ENCODE measurements at regions of chrX and their contacts with region 1.

Region 1: DNA sequence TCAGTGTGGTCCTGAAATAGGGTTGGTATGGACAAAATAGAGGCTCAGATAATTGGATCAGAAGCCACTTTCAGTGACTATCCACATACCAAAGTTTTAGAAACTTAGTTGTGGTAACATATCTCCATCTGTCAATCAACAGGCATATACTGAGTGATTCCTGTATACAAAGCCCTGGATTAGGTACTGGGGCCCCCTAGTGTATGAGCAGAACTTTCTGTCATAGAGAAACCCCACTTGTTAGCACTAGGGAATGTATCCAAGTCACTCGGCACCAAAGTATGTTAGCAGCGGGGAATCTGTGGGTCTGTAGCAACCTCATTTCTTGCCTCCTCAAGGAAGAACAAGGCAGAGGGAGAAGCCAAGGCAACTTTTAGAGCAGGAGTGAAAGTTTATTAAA is 50.7 kb downstream of the MAP7D3 start:
- DNase-seq: peak in 1 of 5 donors; percentile 35
- H3K4me3 ChIP-seq: no peak overlapping the region
- H3K4me3 Mint-ChIP-seq: no peak overlapping the region
- H3K27ac ChIP-seq: no peak overlapping the region
- H3K27ac Mint-ChIP-seq: peak overlapping the region in 4 of 7 donors; percentile 24 to 85 (median 67)
- H3K4me1 ChIP-seq: peaks cover 37% of the 10 kb centered on the region
- H3K4me1 Mint-ChIP-seq: peaks cover 22 to 50% (median 31%) of the 10 kb centered on the region in 4 donors
- H3K27me3 ChIP-seq: no peaks in the 10 kb centered on the region
- H3K27me3 Mint-ChIP-seq: no peaks in the 10 kb centered on the region

Region 2: DNA sequence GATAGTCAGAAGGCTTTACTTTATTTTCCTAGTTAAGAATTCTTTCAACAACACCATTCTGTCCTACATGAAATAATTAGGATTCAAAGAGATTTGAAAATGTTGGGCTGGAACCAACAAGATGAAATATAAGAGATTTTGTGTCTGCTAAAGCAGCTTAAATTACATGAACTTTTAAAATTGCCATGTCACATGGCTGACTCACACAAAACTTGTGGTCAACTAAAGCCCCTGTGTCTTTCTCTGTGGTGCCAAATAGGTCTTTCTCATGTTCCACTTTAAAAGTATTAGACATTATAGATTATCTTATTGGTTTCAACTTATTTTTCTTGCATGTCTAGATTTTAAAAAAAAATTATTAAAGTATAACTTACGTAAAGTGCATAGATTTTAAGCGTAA is 113.9 kb before region 1 on chrX:
- CTCF ChIA-PET with region 1: no interaction called
- POLR2A ChIA-PET with region 1: no interaction called
- intact Hi-C with region 1: no loop called
- DNase-seq: no peak
- H3K4me3 ChIP-seq: no peak overlapping the region
- H3K4me3 Mint-ChIP-seq: no peak overlapping the region
- H3K27ac ChIP-seq: no peak overlapping the region
- H3K27ac Mint-ChIP-seq: no peak overlapping the region
- H3K4me1 ChIP-seq: no peaks in the 10 kb centered on the region
- H3K4me1 Mint-ChIP-seq: no peaks in the 10 kb centered on the region
- H3K27me3 ChIP-seq: no peaks in the 10 kb centered on the region
- H3K27me3 Mint-ChIP-seq: no peaks in the 10 kb centered on the region

Region 3: DNA sequence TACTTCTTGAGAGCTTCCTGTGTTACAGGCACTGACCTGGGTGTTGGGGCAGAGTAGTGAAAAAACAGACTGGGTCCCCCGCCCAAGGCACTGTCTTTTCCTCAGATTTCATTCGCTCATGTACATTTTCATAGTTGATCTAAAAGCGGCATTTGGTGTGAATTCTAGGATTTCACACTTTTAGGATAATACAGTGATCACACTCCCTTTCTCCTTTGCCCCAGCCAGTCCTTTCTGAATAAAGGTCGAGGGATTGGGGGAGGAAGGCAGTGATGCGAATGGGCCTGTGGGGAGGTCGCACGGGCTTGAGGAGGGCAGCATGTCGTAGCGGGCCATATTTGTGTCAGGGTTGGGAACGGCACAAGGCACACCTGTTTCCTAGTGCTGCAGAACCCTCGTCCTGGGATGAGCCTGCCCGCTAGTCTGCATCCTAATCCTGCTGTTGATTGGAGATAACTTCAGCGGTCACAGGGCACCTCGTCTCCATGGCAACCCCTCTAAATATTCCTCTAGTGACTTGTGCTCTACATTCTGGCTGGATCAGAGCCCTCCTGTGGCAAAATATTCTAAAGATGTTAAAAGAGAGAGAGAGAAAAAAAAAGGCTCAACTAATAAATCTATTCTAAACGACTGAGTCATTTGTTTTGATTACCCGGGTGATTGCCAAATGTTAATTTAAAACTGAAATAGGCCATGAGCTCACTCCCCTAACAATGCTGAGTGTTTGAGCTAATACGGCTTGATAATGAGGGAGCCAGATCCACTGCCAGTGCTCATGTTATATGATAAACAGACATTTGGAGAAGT is 31.3 kb before region 1 on chrX:
- CTCF ChIA-PET with region 1: interaction called, 3 read pairs
- POLR2A ChIA-PET with region 1: no interaction called
- intact Hi-C with region 1: loop called (anchors 5 kb)
- DNase-seq: no peak
- H3K4me3 ChIP-seq: no peak overlapping the region
- H3K4me3 Mint-ChIP-seq: no peak overlapping the region
- H3K27ac ChIP-seq: no peak overlapping the region
- H3K27ac Mint-ChIP-seq: no peak overlapping the region
- H3K4me1 ChIP-seq: no peaks in the 10 kb centered on the region
- H3K4me1 Mint-ChIP-seq: peaks cover 0 to 6% (median 0%) of the 10 kb centered on the region in 4 donors
- H3K27me3 ChIP-seq: no peaks in the 10 kb centered on the region
- H3K27me3 Mint-ChIP-seq: no peaks in the 10 kb centered on the region

Region 4: GRCh38 chrX:136268051-136269048 is 67.9 kb after region 1 on chrX:
- CTCF ChIA-PET with region 1: no interaction called
- POLR2A ChIA-PET with region 1: interaction called, 4 read pairs
- intact Hi-C with region 1: loop called (anchors 2 kb)
- DNase-seq: peak; percentile 34 to 54 (median 44)
- H3K4me3 ChIP-seq: no peak overlapping the region
- H3K4me3 Mint-ChIP-seq: no peak overlapping the region
- H3K27ac ChIP-seq: no peak overlapping the region
- H3K27ac Mint-ChIP-seq: no peak overlapping the region
- H3K4me1 ChIP-seq: no peaks in the 10 kb centered on the region
- H3K4me1 Mint-ChIP-seq: no peaks in the 10 kb centered on the region
- H3K27me3 ChIP-seq: no peaks in the 10 kb centered on the region
- H3K27me3 Mint-ChIP-seq: no peaks in the 10 kb centered on the region

Region 5: DNA sequence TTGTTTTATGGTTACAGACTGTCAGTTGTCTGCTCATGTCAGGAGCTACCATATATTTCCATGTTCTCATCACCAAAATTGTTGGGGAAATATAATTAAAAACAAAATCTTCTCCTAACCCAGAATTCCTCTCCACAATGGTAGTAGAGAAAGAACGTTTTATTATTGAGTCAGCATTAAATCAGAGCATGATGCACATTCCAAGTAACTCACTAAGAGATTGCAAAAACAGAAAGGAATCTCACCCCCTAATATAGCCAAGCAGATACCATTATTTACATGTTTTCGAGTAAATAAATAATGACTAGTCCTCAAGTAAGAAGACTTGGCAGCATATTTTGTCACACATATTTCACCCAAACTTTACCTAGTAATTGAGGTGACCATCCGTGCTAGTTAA is 616.5 kb after region 1 on chrX:
- CTCF ChIA-PET with region 1: no interaction called
- POLR2A ChIA-PET with region 1: no interaction called
- intact Hi-C with region 1: no loop called
- DNase-seq: no peak
- H3K4me3 ChIP-seq: no peak overlapping the region
- H3K4me3 Mint-ChIP-seq: no peak overlapping the region
- H3K27ac ChIP-seq: no peak overlapping the region
- H3K27ac Mint-ChIP-seq: no peak overlapping the region
- H3K4me1 ChIP-seq: no peaks in the 10 kb centered on the region
- H3K4me1 Mint-ChIP-seq: peaks cover 0 to 4% (median 0%) of the 10 kb centered on the region in 4 donors
- H3K27me3 ChIP-seq: no peaks in the 10 kb centered on the region
- H3K27me3 Mint-ChIP-seq: no peaks in the 10 kb centered on the region

Measured in CD4-positive, alpha-beta memory T cell (primary cell).